ENCODE measurements at regions of chr5 and their contacts with region 1.

Region 1: GRCh38 chr5:132500931-132501630 is 10.5 kb upstream of the IRF1 start:
- DNase-seq: peak; percentile 63 to 90 (median 73)
- ATAC-seq: peak; percentile 26
- H3K4me3 ChIP-seq: no peak overlapping the region
- H3K4me3 Mint-ChIP-seq: no peak overlapping the region
- H3K27ac ChIP-seq: peak overlapping the region in 1 of 2 donors; percentile 37
- H3K27ac Mint-ChIP-seq: peak overlapping the region; percentile 65
- H3K4me1 ChIP-seq: peaks cover 49% of the 10 kb centered on the region
- H3K4me1 Mint-ChIP-seq: peaks cover 29% of the 10 kb centered on the region
- H3K27me3 ChIP-seq: no peaks in the 10 kb centered on the region
- H3K27me3 Mint-ChIP-seq: peaks cover 3% of the 10 kb centered on the region
- CTCF ChIP-seq: peak; percentile 88

Region 2: DNA sequence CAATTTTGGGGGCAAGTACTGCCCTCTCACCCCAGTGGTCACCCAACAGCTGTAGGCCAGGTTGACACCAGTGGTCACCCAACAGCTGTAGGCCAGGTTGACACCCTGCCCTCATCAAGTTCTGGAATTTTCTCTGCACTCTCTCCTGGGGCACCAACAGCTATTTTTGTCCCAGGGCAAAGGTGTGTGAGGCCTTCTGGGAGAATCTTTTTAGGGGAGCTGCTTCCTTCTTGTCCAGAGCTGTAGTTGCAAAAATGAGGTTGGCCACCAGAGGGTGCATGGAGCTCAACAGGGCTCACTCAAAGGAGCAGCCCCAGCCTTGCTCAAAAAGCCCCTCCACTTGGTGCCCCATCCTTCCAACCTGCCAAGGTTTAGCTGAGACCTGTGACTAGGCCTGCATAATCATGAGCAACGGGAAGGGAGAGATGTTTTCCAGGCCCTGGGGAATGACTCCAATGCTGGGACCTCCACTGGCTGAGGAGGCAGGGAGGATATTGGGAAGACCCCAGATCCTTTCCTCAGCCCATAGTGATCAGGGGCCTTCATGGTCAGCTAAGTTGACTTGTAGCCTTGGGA is 262.8 kb before region 1 on chr5:
- CTCF ChIA-PET with region 1: interaction called, 8 read pairs
- POLR2A ChIA-PET with region 1: interaction called, 5 read pairs
- intact Hi-C with region 1: loop called (anchors 1 kb)
- DNase-seq: peak; percentile 36 to 76 (median 60)
- ATAC-seq: peak; percentile 67
- H3K4me3 ChIP-seq: no peak overlapping the region
- H3K4me3 Mint-ChIP-seq: no peak overlapping the region
- H3K27ac ChIP-seq: no peak overlapping the region
- H3K27ac Mint-ChIP-seq: no peak overlapping the region
- H3K4me1 ChIP-seq: no peaks in the 10 kb centered on the region
- H3K4me1 Mint-ChIP-seq: no peaks in the 10 kb centered on the region
- H3K27me3 ChIP-seq: peaks cover 0 to 2% of the 10 kb centered on the region in 2 experiments
- H3K27me3 Mint-ChIP-seq: peaks cover 4% of the 10 kb centered on the region
- CTCF ChIP-seq: peak; percentile 80

Region 3: GRCh38 chr5:132272311-132273210 is 228.5 kb before region 1 on chr5:
- CTCF ChIA-PET with region 1: no interaction called
- POLR2A ChIA-PET with region 1: no interaction called
- intact Hi-C with region 1: loop called (anchors 1 kb)
- DNase-seq: peak in 13 of 14 experiments; percentile 48 to 77 (median 61)
- ATAC-seq: no peak
- H3K4me3 ChIP-seq: no peak overlapping the region
- H3K4me3 Mint-ChIP-seq: no peak overlapping the region
- H3K27ac ChIP-seq: no peak overlapping the region
- H3K27ac Mint-ChIP-seq: no peak overlapping the region
- H3K4me1 ChIP-seq: peaks cover 15% of the 10 kb centered on the region
- H3K4me1 Mint-ChIP-seq: peaks cover 11% of the 10 kb centered on the region
- H3K27me3 ChIP-seq: no peaks in the 10 kb centered on the region
- H3K27me3 Mint-ChIP-seq: peaks cover 31% of the 10 kb centered on the region
- CTCF ChIP-seq: peak; percentile 77

Region 4: GRCh38 chr5:134038138-134038537 is 1537.1 kb after region 1 on chr5:
- CTCF ChIA-PET with region 1: no interaction called
- POLR2A ChIA-PET with region 1: no interaction called
- intact Hi-C with region 1: no loop called
- DNase-seq: no peak
- ATAC-seq: no peak
- H3K4me3 ChIP-seq: no peak overlapping the region
- H3K4me3 Mint-ChIP-seq: no peak overlapping the region
- H3K27ac ChIP-seq: no peak overlapping the region
- H3K27ac Mint-ChIP-seq: peak overlapping the region; percentile 83
- H3K4me1 ChIP-seq: peaks cover 39% of the 10 kb centered on the region
- H3K4me1 Mint-ChIP-seq: peaks cover 56% of the 10 kb centered on the region
- H3K27me3 ChIP-seq: no peaks in the 10 kb centered on the region
- H3K27me3 Mint-ChIP-seq: no peaks in the 10 kb centered on the region
- CTCF ChIP-seq: no peak

Measured in CD4-positive, alpha-beta T cell (primary cell).